Activated CD4-positive, alpha-beta memory T cell treated with anti-CD3 and anti-CD28 coated beads for 36 hours (primary cell): ENCODE measurements at regions of chr17 and their contacts with region 1.

Region 1: GRCh38 chr17:50169121-50169764 is 3.4 kb downstream of the SGCA start:
- DNase-seq: peak; percentile 68
- H3K4me3 Mint-ChIP-seq: peak overlapping the region; percentile 52
- H3K27ac Mint-ChIP-seq: no peak overlapping the region
- H3K4me1 Mint-ChIP-seq: peaks cover 19% of the 10 kb centered on the region
- H3K27me3 Mint-ChIP-seq: no peaks in the 10 kb centered on the region

Region 2: DNA sequence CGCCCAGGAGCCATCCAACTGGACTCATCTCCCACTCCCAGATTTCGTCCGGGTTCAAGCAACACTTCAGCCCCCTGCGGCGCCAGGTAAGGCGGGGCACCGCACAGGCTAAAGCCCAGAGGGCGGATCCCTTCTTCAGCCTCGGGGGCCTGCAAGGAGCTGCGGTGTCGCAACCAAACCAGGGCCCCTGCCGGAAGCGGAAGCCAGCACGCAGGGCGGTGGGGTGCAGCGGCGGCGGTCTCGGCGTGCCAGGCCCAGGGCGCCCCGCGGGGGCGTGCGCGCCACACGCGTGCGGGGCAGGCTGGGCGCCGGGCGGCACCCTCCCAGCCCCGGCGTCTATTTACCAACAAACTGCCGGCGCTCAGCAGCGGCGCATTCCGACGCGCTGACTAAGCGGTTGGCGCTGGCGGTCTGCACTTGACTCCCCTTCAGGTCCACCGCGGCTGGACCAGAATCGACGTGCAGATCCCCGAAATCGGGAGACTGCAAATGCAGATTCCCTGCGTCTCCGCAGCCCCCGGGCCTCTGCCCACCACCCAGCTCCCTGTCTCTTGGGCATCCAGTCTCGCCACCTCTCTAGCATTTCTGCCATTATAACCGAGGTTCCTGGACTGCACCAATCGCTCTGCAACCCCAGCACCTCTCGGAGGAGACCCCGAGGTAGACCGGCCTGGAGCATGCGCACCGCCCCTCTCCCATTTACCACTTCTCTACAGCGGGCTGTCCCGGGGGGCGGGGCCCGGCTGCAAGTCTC is 200.7 kb before region 1 on chr17:
- CTCF ChIA-PET with region 1: no interaction called
- POLR2A ChIA-PET with region 1: no interaction called
- intact Hi-C with region 1: no loop called
- DNase-seq: peak; percentile 81
- H3K4me3 Mint-ChIP-seq: peak overlapping the region; percentile 83
- H3K27ac Mint-ChIP-seq: no peak overlapping the region
- H3K4me1 Mint-ChIP-seq: peaks cover 34% of the 10 kb centered on the region
- H3K27me3 Mint-ChIP-seq: peaks cover 80% of the 10 kb centered on the region

Region 3: DNA sequence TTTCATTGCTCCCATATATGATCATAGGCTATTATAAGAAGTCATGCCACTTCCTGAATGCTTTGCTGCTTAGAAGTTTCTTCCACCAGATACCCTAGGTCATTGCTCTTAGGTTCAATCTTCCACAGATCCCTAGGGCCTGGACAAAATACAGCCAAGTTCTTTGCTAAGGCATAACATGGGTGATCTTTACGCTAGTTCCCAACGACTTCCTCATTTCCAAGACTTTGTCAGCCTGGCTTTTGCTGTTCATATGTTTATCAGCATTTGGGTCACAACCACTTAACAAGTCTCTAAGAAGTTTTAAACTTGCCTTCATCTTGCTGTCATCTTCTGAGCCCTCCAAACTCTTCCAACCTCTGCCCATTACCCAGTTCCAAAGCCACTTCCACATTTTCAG is 154.1 kb before region 1 on chr17:
- CTCF ChIA-PET with region 1: no interaction called
- POLR2A ChIA-PET with region 1: no interaction called
- intact Hi-C with region 1: no loop called
- DNase-seq: no peak
- H3K4me3 Mint-ChIP-seq: no peak overlapping the region
- H3K27ac Mint-ChIP-seq: no peak overlapping the region
- H3K4me1 Mint-ChIP-seq: no peaks in the 10 kb centered on the region
- H3K27me3 Mint-ChIP-seq: peaks cover 21% of the 10 kb centered on the region

Region 4: GRCh38 chr17:50139950-50140871 is 29.0 kb before region 1 on chr17:
- CTCF ChIA-PET with region 1: interaction called, 27 read pairs
- POLR2A ChIA-PET with region 1: no interaction called
- intact Hi-C with region 1: no loop called
- DNase-seq: peak; percentile 89
- H3K4me3 Mint-ChIP-seq: peak overlapping the region; percentile 55
- H3K27ac Mint-ChIP-seq: peak overlapping the region; percentile 77
- H3K4me1 Mint-ChIP-seq: peaks cover 58% of the 10 kb centered on the region
- H3K27me3 Mint-ChIP-seq: no peaks in the 10 kb centered on the region

Region 5: DNA sequence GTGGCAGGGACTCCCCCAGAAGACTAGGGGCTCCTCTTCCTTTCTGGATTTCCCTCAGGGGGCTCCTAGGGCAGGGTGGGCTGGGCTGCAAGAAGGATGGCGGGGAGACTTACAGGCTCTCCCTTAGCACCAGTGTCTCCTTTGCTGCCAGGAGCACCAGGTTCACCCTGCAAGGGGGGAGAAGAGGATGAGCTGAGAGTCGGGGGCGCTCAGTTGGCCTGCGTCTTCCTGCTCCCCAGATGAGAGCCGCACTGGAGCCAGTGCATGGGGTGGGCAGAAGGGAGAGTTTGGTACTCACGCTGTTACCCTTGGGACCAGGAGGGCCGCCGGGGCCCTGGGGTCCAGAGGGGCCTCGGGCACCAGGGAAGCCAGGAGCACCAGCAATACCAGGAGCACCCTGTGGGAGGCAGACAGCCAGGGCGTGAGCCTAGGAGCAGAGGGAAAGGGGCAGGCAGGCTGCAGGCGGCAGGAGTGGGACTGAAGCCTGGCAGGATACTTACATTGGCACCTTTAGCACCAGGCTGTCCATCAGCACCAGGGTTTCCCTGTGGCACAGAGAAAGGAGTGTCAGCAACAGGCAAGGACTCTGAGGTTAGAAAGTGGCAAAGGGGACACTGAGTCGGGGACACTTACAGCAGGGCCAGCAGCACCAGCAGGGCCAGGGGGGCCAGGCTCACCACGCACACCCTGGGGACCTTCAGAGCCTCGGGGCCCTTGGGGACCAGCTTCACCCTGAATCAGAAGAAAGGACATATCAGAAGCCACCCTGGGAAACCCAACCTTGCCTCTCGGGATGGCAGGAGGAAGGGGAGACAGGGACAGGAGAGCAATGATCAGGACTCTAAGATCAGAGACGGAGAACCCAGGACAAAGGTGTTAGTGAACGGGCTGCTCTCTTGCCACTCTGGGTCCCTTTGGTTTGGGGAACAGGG is 26.0 kb after region 1 on chr17:
- CTCF ChIA-PET with region 1: interaction called, 42 read pairs
- POLR2A ChIA-PET with region 1: interaction called, 3 read pairs
- intact Hi-C with region 1: loop called (anchors 1 kb)
- DNase-seq: no peak
- H3K4me3 Mint-ChIP-seq: no peak overlapping the region
- H3K27ac Mint-ChIP-seq: no peak overlapping the region
- H3K4me1 Mint-ChIP-seq: peaks cover 11% of the 10 kb centered on the region
- H3K27me3 Mint-ChIP-seq: peaks cover 10% of the 10 kb centered on the region

Region 6: DNA sequence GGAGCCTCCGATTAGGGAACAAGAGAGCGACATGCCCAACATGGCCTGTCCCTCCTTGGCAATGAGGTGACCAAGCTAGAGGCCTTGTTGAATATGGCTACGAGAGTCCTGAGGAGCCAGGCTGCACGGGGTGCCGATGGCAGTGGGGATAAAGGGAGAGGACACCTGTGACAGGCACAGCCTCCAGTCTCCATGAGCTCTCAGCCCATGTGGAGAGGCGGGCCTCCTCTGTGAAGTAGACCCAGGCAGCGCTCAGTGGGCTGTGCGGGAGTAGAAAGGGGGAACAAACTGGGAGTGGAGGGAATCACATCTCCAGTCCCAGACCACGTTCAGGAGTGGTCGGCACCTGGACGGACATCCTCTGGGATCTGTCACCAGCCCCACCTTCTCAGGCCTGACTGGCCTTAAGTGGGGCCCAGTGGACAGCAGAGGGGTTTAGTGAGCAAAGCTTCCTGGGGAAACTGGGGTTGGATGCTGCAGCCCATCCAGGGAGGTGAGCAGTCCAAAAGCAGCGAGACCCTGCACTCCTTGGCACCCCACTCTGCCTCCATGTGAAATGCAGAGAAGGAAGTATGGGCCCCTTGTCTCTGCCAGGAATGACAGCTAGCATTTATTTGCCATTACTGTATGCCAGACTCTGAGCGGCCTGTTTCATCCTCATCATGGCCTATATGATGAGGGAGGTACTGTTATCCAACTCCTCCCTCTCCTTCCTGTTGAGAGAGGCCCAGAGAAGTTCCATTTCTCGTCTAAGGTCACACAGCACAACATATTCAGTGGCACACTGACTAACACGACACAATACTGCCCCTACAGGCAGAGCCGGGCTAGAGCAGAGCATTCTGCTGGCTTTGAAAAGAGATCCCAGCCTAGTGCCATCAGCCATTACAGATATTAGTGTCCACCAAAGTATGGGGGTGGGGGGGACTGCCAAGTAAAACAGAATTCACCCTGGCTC is 100.5 kb after region 1 on chr17:
- CTCF ChIA-PET with region 1: interaction called, 20 read pairs
- POLR2A ChIA-PET with region 1: no interaction called
- intact Hi-C with region 1: no loop called
- DNase-seq: peak; percentile 79
- H3K4me3 Mint-ChIP-seq: no peak overlapping the region
- H3K27ac Mint-ChIP-seq: no peak overlapping the region
- H3K4me1 Mint-ChIP-seq: peaks cover 5% of the 10 kb centered on the region
- H3K27me3 Mint-ChIP-seq: peaks cover 15% of the 10 kb centered on the region

Region 7: GRCh38 chr17:50297407-50297865 is 128.2 kb after region 1 on chr17:
- CTCF ChIA-PET with region 1: interaction called, 35 read pairs
- POLR2A ChIA-PET with region 1: no interaction called
- intact Hi-C with region 1: no loop called
- DNase-seq: peak; percentile 90
- H3K4me3 Mint-ChIP-seq: no peak overlapping the region
- H3K27ac Mint-ChIP-seq: no peak overlapping the region
- H3K4me1 Mint-ChIP-seq: peaks cover 8% of the 10 kb centered on the region
- H3K27me3 Mint-ChIP-seq: peaks cover 15% of the 10 kb centered on the region